Activated B cell treated with CpG ODN at 0.5 μM for 24 hours (primary cell): ENCODE measurements at regions of chr17 and their contacts with region 1.

Region 1: DNA sequence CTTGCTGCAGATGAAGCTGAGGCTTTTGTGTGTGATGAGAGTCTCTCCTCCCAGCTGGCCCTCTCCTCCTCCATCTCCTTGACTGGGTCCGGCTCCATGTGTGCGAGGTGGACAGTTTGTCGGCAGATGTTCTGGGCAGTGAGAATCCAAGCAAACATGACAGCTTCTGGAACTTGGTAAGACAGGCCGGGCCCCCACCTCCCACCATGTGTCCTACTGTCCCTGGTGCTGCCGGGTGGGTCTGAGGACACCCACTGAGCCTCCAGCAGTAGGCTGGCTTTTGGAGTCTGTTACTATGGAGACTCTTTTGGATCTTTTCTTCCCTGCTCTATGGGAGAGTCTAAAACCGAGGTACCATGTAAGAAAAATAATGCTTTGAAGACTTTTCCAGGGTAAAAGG is 12.7 kb downstream of the NUP85 start:
- DNase-seq: no peak
- ATAC-seq: no peak
- H3K4me3 Mint-ChIP-seq: no peak overlapping the region
- H3K27ac Mint-ChIP-seq: no peak overlapping the region
- H3K4me1 Mint-ChIP-seq: no peaks in the 10 kb centered on the region
- H3K27me3 Mint-ChIP-seq: no peaks in the 10 kb centered on the region
- CTCF ChIP-seq: no peak

Region 2: DNA sequence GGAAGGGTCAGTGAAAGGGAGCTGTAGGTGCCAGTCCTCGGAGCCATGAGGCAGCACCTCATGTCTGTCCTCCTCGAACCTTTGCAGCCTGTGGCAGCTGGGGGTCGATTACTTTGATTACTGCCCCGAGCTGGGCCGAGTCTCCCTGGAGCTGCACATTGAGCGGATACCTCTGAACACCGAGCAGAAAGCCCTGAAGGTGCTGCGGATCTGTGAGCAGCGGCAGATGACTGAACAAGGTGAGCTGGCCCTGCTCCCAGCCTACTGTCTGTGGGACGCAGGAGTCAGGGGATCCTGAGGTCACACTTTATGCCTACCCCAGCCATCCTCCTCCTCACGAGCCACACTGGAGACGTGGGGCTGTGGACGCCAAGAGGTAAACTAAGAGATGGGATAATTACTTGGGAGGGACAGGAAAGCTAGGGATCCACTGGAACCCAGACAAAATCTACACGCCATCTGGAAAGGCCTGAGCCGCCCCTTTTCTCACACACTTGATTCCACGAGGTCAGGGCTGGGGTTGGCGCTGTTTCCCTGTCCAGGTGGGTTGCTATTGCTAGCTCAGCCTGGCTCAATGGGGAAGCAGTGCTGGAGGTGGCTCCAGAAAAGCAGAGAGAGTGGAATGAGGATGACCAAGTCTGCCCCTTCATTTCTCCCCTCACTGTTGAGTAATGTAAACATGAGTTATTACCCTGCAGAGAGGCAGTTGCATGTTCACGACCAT is 13.8 kb after region 1 on chr17:
- CTCF ChIA-PET with region 1: no interaction called
- POLR2A ChIA-PET with region 1: no interaction called
- intact Hi-C with region 1: loop called (anchors 1 kb)
- DNase-seq: no peak
- ATAC-seq: no peak
- H3K4me3 Mint-ChIP-seq: no peak overlapping the region
- H3K27ac Mint-ChIP-seq: no peak overlapping the region
- H3K4me1 Mint-ChIP-seq: no peaks in the 10 kb centered on the region
- H3K27me3 Mint-ChIP-seq: no peaks in the 10 kb centered on the region
- CTCF ChIP-seq: no peak